ENCODE measurements at regions of chr7 and their contacts with region 1.

Region 1: GRCh38 chr7:150420987-150421674 is 29.3 kb upstream of the GIMAP8 start:
- DNase-seq: peak; percentile 90
- ATAC-seq: peak; percentile 100
- H3K4me3 Mint-ChIP-seq: peak overlapping the region; percentile 31
- H3K27ac Mint-ChIP-seq: peak overlapping the region; percentile 50
- H3K4me1 Mint-ChIP-seq: peaks cover 11% of the 10 kb centered on the region
- H3K27me3 Mint-ChIP-seq: peaks cover 2% of the 10 kb centered on the region

Region 2: DNA sequence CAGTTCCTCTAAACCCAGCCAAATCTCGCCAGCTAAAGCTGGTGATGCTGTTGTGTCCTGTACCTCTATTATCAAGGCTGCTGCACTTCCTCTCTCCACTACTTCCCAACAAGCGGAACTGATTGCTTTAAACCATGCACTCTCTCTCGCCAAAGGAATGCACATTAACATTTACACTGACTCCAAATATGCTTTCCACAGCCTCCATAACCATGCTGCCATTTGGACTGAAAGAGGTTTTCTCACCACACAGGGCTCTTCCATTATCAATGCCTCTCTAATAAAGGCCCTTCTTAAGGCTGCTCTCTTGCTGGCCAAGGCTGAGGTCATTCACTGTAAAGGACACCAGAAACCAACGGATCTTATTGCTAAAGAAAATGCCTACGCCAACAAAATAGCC is 109.4 kb before region 1 on chr7:
- CTCF ChIA-PET with region 1: no interaction called
- DNase-seq: no peak
- ATAC-seq: no peak
- H3K4me3 Mint-ChIP-seq: no peak overlapping the region
- H3K27ac Mint-ChIP-seq: no peak overlapping the region
- H3K4me1 Mint-ChIP-seq: peaks cover 1% of the 10 kb centered on the region
- H3K27me3 Mint-ChIP-seq: no peaks in the 10 kb centered on the region

Region 3: GRCh38 chr7:150356265-150356897 is 64.8 kb before region 1 on chr7:
- CTCF ChIA-PET with region 1: interaction called, 11 read pairs
- DNase-seq: no peak
- ATAC-seq: peak; percentile 34
- H3K4me3 Mint-ChIP-seq: no peak overlapping the region
- H3K27ac Mint-ChIP-seq: no peak overlapping the region
- H3K4me1 Mint-ChIP-seq: peaks cover 43% of the 10 kb centered on the region
- H3K27me3 Mint-ChIP-seq: peaks cover 6% of the 10 kb centered on the region

Region 4: GRCh38 chr7:150404805-150405583 is 16.1 kb before region 1 on chr7:
- CTCF ChIA-PET with region 1: interaction called, 18 read pairs
- DNase-seq: peak; percentile 87
- ATAC-seq: peak; percentile 79
- H3K4me3 Mint-ChIP-seq: peak overlapping the region; percentile 97
- H3K27ac Mint-ChIP-seq: peak overlapping the region; percentile 94
- H3K4me1 Mint-ChIP-seq: peaks cover 36% of the 10 kb centered on the region
- H3K27me3 Mint-ChIP-seq: no peaks in the 10 kb centered on the region

Region 5: DNA sequence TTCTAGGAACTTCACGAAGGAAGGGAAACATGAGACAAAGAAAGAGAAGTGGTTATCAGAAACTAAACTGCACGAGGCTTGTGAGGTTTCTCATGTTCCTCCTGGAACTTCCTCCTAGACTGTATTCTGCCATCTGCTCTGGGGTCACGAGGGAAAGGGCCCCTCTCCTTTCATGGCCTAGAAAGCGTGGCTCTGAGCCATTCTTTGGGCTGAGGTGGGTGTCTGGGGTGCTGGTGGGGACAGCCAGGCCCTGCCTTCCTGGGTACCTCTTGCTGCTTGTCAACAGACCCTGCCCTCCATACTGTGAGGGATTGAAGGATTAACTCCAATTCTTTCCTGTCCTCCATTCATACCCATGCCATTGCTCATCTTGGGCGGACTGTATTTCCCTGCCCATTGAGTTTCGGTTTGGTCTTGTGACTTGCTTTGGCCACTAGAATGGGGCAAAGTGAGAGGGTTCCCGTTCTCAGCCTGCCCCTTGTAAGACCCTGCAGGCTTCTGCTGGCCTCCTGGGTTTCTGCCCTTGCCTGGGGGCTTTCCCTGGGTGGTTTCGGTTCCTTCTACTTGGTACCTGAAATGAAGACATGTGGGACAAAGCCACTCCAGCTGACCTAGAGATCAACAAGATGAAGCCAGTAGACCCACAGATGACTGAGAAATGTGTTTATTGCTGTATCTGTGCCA is 14.4 kb after region 1 on chr7:
- CTCF ChIA-PET with region 1: interaction called, 18 read pairs
- DNase-seq: peak; percentile 39
- ATAC-seq: no peak
- H3K4me3 Mint-ChIP-seq: no peak overlapping the region
- H3K27ac Mint-ChIP-seq: peak overlapping the region; percentile 17
- H3K4me1 Mint-ChIP-seq: peaks cover 58% of the 10 kb centered on the region
- H3K27me3 Mint-ChIP-seq: peaks cover 2% of the 10 kb centered on the region

Measured in activated CD8-positive, alpha-beta memory T cell treated with anti-CD3 and anti-CD28 coated beads, Interleukin-2, amount 10 ng/mL, durations not matched to agents 7 days and 5 days (primary cell).